ENCODE measurements at regions of chr21 and their contacts with region 1.

Region 1: GRCh38 chr21:43659136-43660000 is at the starts of genes HSF2BP and RRP1B:
- DNase-seq: peak; percentile 86 to 93
- ATAC-seq: peak; percentile 95
- H3K4me3 ChIP-seq: peak within 1 kb of the TSS; percentile 79 to 88
- H3K27ac ChIP-seq: peak within 1 kb of the TSS; percentile 62 to 64
- H3K4me1 ChIP-seq: no peaks in the 10 kb centered on the region
- H3K27me3 ChIP-seq: no peaks in the 10 kb centered on the region
- total RNA-seq, gene HSF2BP: 0.51 TPM in 1 of 2 donors, not detected in the other
- total RNA-seq, gene RRP1B: 15.9 to 16.4 TPM

Region 2: GRCh38 chr21:42913476-42913875 is 745.9 kb before region 1 on chr21:
- intact Hi-C with region 1: loop called in 1 of 2 experiments (anchors 10 kb)
- DNase-seq: no peak
- ATAC-seq: no peak
- H3K4me3 ChIP-seq: no peak overlapping the region
- H3K27ac ChIP-seq: no peak overlapping the region
- H3K4me1 ChIP-seq: no peaks in the 10 kb centered on the region
- H3K27me3 ChIP-seq: no peaks in the 10 kb centered on the region

Measured in aorta (tissue), 5 donors.